ENCODE measurements at regions of chr4 and their contacts with region 1.

Region 1: DNA sequence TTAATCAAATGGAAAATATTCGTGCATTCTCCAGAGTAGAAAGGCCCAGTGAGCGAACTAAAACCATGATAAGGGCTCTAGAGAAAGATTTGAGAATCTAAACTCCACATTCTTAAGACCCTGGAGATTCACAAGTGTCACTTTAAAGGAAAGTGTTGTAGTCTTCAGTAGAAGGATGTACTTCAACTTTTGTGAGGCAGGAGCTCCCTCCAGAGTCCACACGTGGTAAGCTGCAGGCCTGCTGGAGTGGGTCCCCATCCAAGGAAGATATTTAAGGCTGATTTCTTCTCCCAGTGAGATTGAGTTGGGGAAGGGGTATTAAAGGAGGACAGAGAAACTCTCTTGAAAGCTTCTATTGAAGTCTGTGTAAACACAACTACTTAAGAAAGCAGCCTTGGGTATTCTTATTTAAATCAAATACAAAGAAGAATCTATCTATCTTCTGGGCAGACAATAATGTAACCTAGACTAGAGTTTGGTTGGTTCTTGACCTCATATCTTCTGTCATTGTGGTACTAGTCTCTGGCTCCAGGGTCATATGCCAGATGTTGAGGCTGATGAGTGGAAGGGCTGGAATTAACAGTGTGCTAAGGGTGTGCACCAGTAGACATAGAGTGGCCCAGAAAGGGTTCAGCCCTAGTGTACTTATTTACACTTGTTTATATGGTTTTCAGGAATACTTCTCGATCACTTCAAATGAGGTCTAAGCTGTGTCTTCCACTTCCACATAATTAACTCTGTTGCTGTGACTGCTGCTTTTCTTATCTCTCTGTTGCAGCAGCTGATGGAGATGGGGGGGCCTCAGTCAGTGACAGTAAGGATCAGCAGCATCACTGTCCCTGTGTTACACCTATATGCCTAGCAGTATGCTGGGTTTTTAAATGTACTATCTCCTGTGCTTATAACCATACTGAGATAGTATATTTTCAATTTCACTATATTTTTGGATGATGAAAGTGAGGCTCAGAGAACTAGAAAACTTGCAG is 76.1 kb downstream of the HMGB2 start:
- DNase-seq: peak; percentile 46
- H3K4me3 ChIP-seq: no peak overlapping the region
- H3K27ac ChIP-seq: no peak overlapping the region
- H3K4me1 ChIP-seq: no peaks in the 10 kb centered on the region
- H3K27me3 ChIP-seq: no peaks in the 10 kb centered on the region
- CTCF ChIP-seq: peak; percentile 91

Region 2: GRCh38 chr4:173013232-173013930 is 244.6 kb before region 1 on chr4:
- intact Hi-C with region 1: loop called (anchors 5 kb)
- DNase-seq: no peak
- H3K4me3 ChIP-seq: no peak overlapping the region
- H3K27ac ChIP-seq: no peak overlapping the region
- H3K4me1 ChIP-seq: peaks cover 4% of the 10 kb centered on the region
- H3K27me3 ChIP-seq: no peaks in the 10 kb centered on the region
- CTCF ChIP-seq: peak; percentile 79

Region 3: DNA sequence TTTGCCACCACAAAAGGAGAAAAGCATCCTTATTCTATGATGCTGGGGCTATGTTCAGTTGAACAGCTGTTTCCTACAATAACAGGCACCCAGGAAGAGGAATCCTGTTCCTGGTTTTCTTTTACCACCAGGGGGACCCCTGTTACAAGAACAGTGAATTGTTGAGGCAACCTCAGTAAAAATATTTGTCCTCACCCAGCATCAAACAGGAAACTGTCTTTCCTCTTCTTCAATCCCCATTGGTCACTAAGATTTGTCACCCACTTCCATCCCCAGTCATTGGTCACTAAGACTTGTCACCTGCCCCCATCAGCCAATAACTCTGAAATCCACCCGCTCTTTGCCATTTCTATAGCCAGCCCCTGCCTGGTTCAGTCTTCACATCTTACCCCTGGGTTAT is 232.9 kb before region 1 on chr4:
- intact Hi-C with region 1: loop called (anchors 5 kb)
- DNase-seq: no peak
- H3K4me3 ChIP-seq: no peak overlapping the region
- H3K27ac ChIP-seq: no peak overlapping the region
- H3K4me1 ChIP-seq: no peaks in the 10 kb centered on the region
- H3K27me3 ChIP-seq: no peaks in the 10 kb centered on the region
- CTCF ChIP-seq: peak; percentile 76

Region 4: DNA sequence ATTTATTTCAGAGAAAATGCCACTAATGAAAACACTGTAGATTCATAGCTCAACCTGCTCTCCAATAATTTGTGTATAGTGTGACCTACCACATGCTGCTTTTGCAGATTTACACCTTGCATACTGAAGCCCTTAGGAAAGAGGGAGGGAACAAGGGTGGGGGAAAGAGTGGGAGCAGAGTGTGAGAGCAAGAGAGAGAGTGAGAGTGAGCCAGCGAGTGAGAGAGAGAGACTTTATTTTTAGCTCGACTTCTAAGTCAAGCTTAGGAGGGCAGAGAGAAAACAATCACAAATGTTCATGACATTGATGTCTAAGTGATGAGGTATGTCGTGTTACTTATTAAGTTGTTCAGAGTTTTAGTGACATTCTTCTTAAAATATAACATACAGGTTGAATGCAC is 384.5 kb after region 1 on chr4:
- intact Hi-C with region 1: no loop called
- DNase-seq: no peak
- H3K4me3 ChIP-seq: no peak overlapping the region
- H3K27ac ChIP-seq: peak overlapping the region; percentile 62
- H3K4me1 ChIP-seq: peaks cover 22% of the 10 kb centered on the region
- H3K27me3 ChIP-seq: no peaks in the 10 kb centered on the region
- CTCF ChIP-seq: no peak

Measured in left ventricle myocardium inferior (tissue), 1 donor.